Activated CD8-positive, alpha-beta T cell treated with anti-CD3 and anti-CD28 coated beads, Interleukin-2, amount 10 ng/mL, durations not matched to agents 7 days and 5 days (primary cell): ENCODE measurements at regions of chr14 and their contacts with region 1.

Region 1: GRCh38 chr14:90288651-90289355 is 32.5 kb downstream of the PSMC1 start:
- DNase-seq: no peak
- ATAC-seq: no peak
- H3K4me3 Mint-ChIP-seq: no peak overlapping the region
- H3K27ac Mint-ChIP-seq: no peak overlapping the region
- H3K4me1 Mint-ChIP-seq: no peaks in the 10 kb centered on the region
- H3K27me3 Mint-ChIP-seq: no peaks in the 10 kb centered on the region

Region 2: GRCh38 chr14:90301668-90302090 is 12.9 kb after region 1 on chr14:
- CTCF ChIA-PET with region 1: interaction called, 10 read pairs
- POLR2A ChIA-PET with region 1: no interaction called
- DNase-seq: no peak
- ATAC-seq: no peak
- H3K4me3 Mint-ChIP-seq: no peak overlapping the region
- H3K27ac Mint-ChIP-seq: no peak overlapping the region
- H3K4me1 Mint-ChIP-seq: peaks cover 10% of the 10 kb centered on the region
- H3K27me3 Mint-ChIP-seq: no peaks in the 10 kb centered on the region